ENCODE measurements at regions of chr7 and their contacts with region 1.

Region 1: GRCh38 chr7:29345600-29345999 is 151.0 kb downstream of the CHN2 start:
- DNase-seq: peak; percentile 63
- H3K4me3 ChIP-seq: no peak overlapping the region
- H3K27ac ChIP-seq: no peak overlapping the region
- H3K4me1 ChIP-seq: peaks cover 4% of the 10 kb centered on the region in 2 experiments; a peak in 1 of 4 replicates
- H3K27me3 ChIP-seq: no peaks in the 10 kb centered on the region
- CTCF ChIP-seq: peak; percentile 37
- EP300 ChIP-seq: no peak
- RAD21 ChIP-seq: peak; percentile 93

Region 2: GRCh38 chr7:29194594-29195427 is 150.8 kb before region 1 on chr7 and contains the start of gene CHN2:
- CTCF ChIA-PET with region 1: interaction called, 185 read pairs
- POLR2A ChIA-PET with region 1: no interaction called
- DNase-seq: peak; percentile 90
- H3K4me3 ChIP-seq: peak within 1 kb of the TSS; percentile 59 to 61
- H3K27ac ChIP-seq: no peak within 1 kb of the TSS; a peak in 1 of 4 replicates
- H3K4me1 ChIP-seq: peaks cover 0 to 7% of the 10 kb centered on the region in 2 experiments; a peak in 2 of 4 replicates
- H3K27me3 ChIP-seq: peaks cover 48% of the 10 kb centered on the region
- CTCF ChIP-seq: no peak
- EP300 ChIP-seq: no peak
- RAD21 ChIP-seq: 0 out of 2 replicates have a peak, but pooled peaks have one; percentile 13
- polyA plus RNA-seq, gene CHN2: 0.02 TPM in 1 of 2 replicates, not detected in the other

Region 3: GRCh38 chr7:29360633-29361625 is 15.3 kb after region 1 on chr7:
- CTCF ChIA-PET with region 1: interaction called, 19 read pairs
- POLR2A ChIA-PET with region 1: no interaction called
- DNase-seq: no peak
- H3K4me3 ChIP-seq: no peak overlapping the region
- H3K27ac ChIP-seq: no peak overlapping the region
- H3K4me1 ChIP-seq: no peaks in the 10 kb centered on the region
- H3K27me3 ChIP-seq: 0 out of 2 replicates have a peak, but pooled peaks cover 11% of the 10 kb centered on the region
- CTCF ChIP-seq: no peak
- EP300 ChIP-seq: no peak
- RAD21 ChIP-seq: no peak